ENCODE measurements at regions of chr4 and their contacts with region 1.

Region 1: GRCh38 chr4:147590249-147590920 is 26.8 kb upstream of the TMEM184C start:
- DNase-seq: peak; percentile 87
- H3K4me3 ChIP-seq: no peak overlapping the region
- H3K27ac ChIP-seq: no peak overlapping the region
- H3K4me1 ChIP-seq: peaks cover 10% of the 10 kb centered on the region
- H3K27me3 ChIP-seq: no peaks in the 10 kb centered on the region
- CTCF ChIP-seq: peak; percentile 84

Region 2: GRCh38 chr4:147019061-147019460 is 571.3 kb before region 1 on chr4:
- CTCF ChIA-PET with region 1: interaction called, 9 read pairs
- POLR2A ChIA-PET with region 1: no interaction called
- intact Hi-C with region 1: loop called (anchors 5 kb)
- DNase-seq: peak; percentile 71
- H3K4me3 ChIP-seq: no peak overlapping the region
- H3K27ac ChIP-seq: no peak overlapping the region
- H3K4me1 ChIP-seq: no peaks in the 10 kb centered on the region
- H3K27me3 ChIP-seq: no peaks in the 10 kb centered on the region
- CTCF ChIP-seq: peak; percentile 72

Region 3: DNA sequence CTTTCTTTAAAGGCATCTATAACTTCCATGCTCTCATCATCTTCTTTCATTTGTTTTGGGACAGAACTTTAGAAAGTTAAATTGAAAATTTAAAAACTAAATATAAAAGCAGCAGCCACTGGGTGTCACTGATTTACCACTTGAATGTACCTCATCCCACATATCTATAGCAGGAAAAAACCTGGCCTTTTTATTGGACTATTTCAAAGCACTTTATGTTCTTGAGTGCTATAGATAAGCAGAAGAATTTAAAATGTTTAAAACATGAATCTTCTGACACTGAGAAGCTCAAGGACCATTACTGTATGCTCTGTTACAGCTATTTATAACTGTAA is 479.4 kb before region 1 on chr4:
- CTCF ChIA-PET with region 1: no interaction called
- POLR2A ChIA-PET with region 1: no interaction called
- intact Hi-C with region 1: loop called (anchors 1 kb)
- DNase-seq: peak; percentile 55
- H3K4me3 ChIP-seq: no peak overlapping the region
- H3K27ac ChIP-seq: no peak overlapping the region
- H3K4me1 ChIP-seq: peaks cover 8% of the 10 kb centered on the region
- H3K27me3 ChIP-seq: no peaks in the 10 kb centered on the region
- CTCF ChIP-seq: peak; percentile 57

Region 4: GRCh38 chr4:147285751-147286150 is 304.6 kb before region 1 on chr4:
- CTCF ChIA-PET with region 1: no interaction called
- POLR2A ChIA-PET with region 1: no interaction called
- intact Hi-C with region 1: no loop called
- DNase-seq: no peak
- H3K4me3 ChIP-seq: no peak overlapping the region
- H3K27ac ChIP-seq: no peak overlapping the region
- H3K4me1 ChIP-seq: no peaks in the 10 kb centered on the region
- H3K27me3 ChIP-seq: no peaks in the 10 kb centered on the region
- CTCF ChIP-seq: no peak

Region 5: GRCh38 chr4:147425019-147425418 is 165.4 kb before region 1 on chr4:
- CTCF ChIA-PET with region 1: no interaction called
- POLR2A ChIA-PET with region 1: no interaction called
- intact Hi-C with region 1: loop called (anchors 2 kb)
- DNase-seq: no peak
- H3K4me3 ChIP-seq: no peak overlapping the region
- H3K27ac ChIP-seq: no peak overlapping the region
- H3K4me1 ChIP-seq: peaks cover 6% of the 10 kb centered on the region
- H3K27me3 ChIP-seq: no peaks in the 10 kb centered on the region
- CTCF ChIP-seq: no peak

Measured in A673 (cell line).